ENCODE measurements at regions of chr3 and their contacts with region 1.

Region 1: GRCh38 chr3:13495921-13496723 is 16.0 kb downstream of the HDAC11 start:
- DNase-seq: peak; percentile 86
- ATAC-seq: peak; percentile 91
- H3K4me3 Mint-ChIP-seq: no peak overlapping the region
- H3K27ac Mint-ChIP-seq: 0 out of 2 replicates have a peak overlapping the region, but pooled peaks have one; percentile 49
- H3K4me1 Mint-ChIP-seq: peaks cover 6% of the 10 kb centered on the region; the same call in 1 of the 2 replicates
- H3K27me3 Mint-ChIP-seq: no peaks in the 10 kb centered on the region; the same call in 1 of the 2 replicates
- CTCF ChIP-seq: peak; percentile 77

Region 2: GRCh38 chr3:13479581-13480339 is 16.4 kb before region 1 on chr3 and contains the start of gene HDAC11:
- CTCF ChIA-PET with region 1: interaction called, 66 read pairs
- POLR2A ChIA-PET with region 1: interaction called, 3 read pairs
- DNase-seq: peak; percentile 99
- ATAC-seq: peak; percentile 93
- H3K4me3 Mint-ChIP-seq: peak within 1 kb of the TSS; percentile 85
- H3K27ac Mint-ChIP-seq: peak within 1 kb of the TSS; percentile 91
- H3K4me1 Mint-ChIP-seq: peaks cover 33% of the 10 kb centered on the region
- H3K27me3 Mint-ChIP-seq: peaks cover 28% of the 10 kb centered on the region
- CTCF ChIP-seq: no peak
- total RNA-seq, gene HDAC11: 11.5 to 12.5 TPM (median 12.0 TPM) in 3 replicates

Region 3: DNA sequence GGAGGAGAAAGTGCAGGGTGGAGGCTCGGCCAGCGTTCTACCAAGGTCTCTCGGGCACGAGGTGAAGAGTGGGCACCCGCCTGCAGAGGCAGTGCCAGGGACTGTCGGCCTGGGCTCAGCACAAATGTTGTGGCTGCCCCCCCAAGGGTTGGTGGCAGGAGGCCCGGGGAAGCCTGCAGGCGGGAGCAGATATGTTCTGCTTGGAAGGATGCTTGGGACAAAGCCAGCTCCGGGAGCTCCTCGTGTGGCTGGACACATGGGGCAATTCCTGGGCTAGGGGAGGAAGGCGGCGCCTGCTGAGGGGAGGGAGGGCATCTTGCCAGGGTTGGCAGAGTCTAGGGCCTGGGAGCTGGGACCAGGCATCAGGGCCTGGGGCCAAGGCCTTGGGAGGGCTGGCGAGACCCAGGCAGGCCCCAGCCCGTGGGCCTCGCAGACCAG is 22.4 kb after region 1 on chr3:
- CTCF ChIA-PET with region 1: interaction called, 13 read pairs
- POLR2A ChIA-PET with region 1: no interaction called
- DNase-seq: no peak
- ATAC-seq: no peak
- H3K4me3 Mint-ChIP-seq: no peak overlapping the region
- H3K27ac Mint-ChIP-seq: no peak overlapping the region
- H3K4me1 Mint-ChIP-seq: peaks cover 3% of the 10 kb centered on the region; the same call in 1 of the 2 replicates
- H3K27me3 Mint-ChIP-seq: no peaks in the 10 kb centered on the region; the same call in none of the 2 replicates
- CTCF ChIP-seq: no peak

Region 4: GRCh38 chr3:13537921-13538320 is 41.8 kb after region 1 on chr3:
- CTCF ChIA-PET with region 1: interaction called, 12 read pairs
- POLR2A ChIA-PET with region 1: no interaction called
- DNase-seq: no peak
- ATAC-seq: no peak
- H3K4me3 Mint-ChIP-seq: no peak overlapping the region
- H3K27ac Mint-ChIP-seq: no peak overlapping the region
- H3K4me1 Mint-ChIP-seq: peaks cover 16% of the 10 kb centered on the region
- H3K27me3 Mint-ChIP-seq: no peaks in the 10 kb centered on the region; the same call in 1 of the 2 replicates
- CTCF ChIP-seq: no peak

Region 5: GRCh38 chr3:13638927-13639326 is 142.8 kb after region 1 on chr3:
- CTCF ChIA-PET with region 1: interaction called, 290 read pairs
- POLR2A ChIA-PET with region 1: no interaction called
- DNase-seq: no peak
- ATAC-seq: no peak
- H3K4me3 Mint-ChIP-seq: no peak overlapping the region
- H3K27ac Mint-ChIP-seq: no peak overlapping the region
- H3K4me1 Mint-ChIP-seq: no peaks in the 10 kb centered on the region
- H3K27me3 Mint-ChIP-seq: no peaks in the 10 kb centered on the region; the same call in 1 of the 2 replicates
- CTCF ChIP-seq: no peak

Measured in WTC11 (cell line).